ENCODE measurements at regions of chr11 and their contacts with region 1.

Region 1: GRCh38 chr11:32176223-32176934 is 85.5 kb downstream of the RCN1 start:
- DNase-seq: peak; percentile 50 to 81 (median 73)
- ATAC-seq: peak; percentile 85
- H3K4me3 ChIP-seq: no peak overlapping the region
- H3K4me3 Mint-ChIP-seq: no peak overlapping the region
- H3K27ac ChIP-seq: no peak overlapping the region
- H3K27ac Mint-ChIP-seq: no peak overlapping the region
- H3K4me1 ChIP-seq: no peaks in the 10 kb centered on the region
- H3K4me1 Mint-ChIP-seq: peaks cover 1 to 13% (median 1%) of the 10 kb centered on the region in 7 donors
- H3K27me3 ChIP-seq: peaks cover 0 to 3% of the 10 kb centered on the region in 2 donors
- H3K27me3 Mint-ChIP-seq: peaks cover 5 to 16% (median 14%) of the 10 kb centered on the region in 5 donors

Region 2: GRCh38 chr11:31107062-31107461 is 1069.3 kb before region 1 on chr11:
- CTCF ChIA-PET with region 1: interaction called, 4 read pairs
- POLR2A ChIA-PET with region 1: no interaction called
- intact Hi-C with region 1: loop called in 1 of 2 experiments (anchors 10 kb)
- DNase-seq: peak in 6 of 9 donors; percentile 1 to 25 (median 20)
- ATAC-seq: no peak
- H3K4me3 ChIP-seq: no peak overlapping the region
- H3K4me3 Mint-ChIP-seq: no peak overlapping the region
- H3K27ac ChIP-seq: no peak overlapping the region
- H3K27ac Mint-ChIP-seq: no peak overlapping the region
- H3K4me1 ChIP-seq: no peaks in the 10 kb centered on the region
- H3K4me1 Mint-ChIP-seq: no peaks in the 10 kb centered on the region
- H3K27me3 ChIP-seq: no peaks in the 10 kb centered on the region
- H3K27me3 Mint-ChIP-seq: peaks cover 0 to 10% (median 0%) of the 10 kb centered on the region in 5 donors

Region 3: GRCh38 chr11:31240338-31240904 is 936.0 kb before region 1 on chr11:
- CTCF ChIA-PET with region 1: interaction called, 10 read pairs
- POLR2A ChIA-PET with region 1: no interaction called
- intact Hi-C with region 1: loop called (anchors 1 kb)
- DNase-seq: peak in 6 of 9 donors; percentile 10 to 22 (median 15)
- ATAC-seq: no peak
- H3K4me3 ChIP-seq: no peak overlapping the region
- H3K4me3 Mint-ChIP-seq: no peak overlapping the region
- H3K27ac ChIP-seq: no peak overlapping the region
- H3K27ac Mint-ChIP-seq: no peak overlapping the region
- H3K4me1 ChIP-seq: no peaks in the 10 kb centered on the region
- H3K4me1 Mint-ChIP-seq: no peaks in the 10 kb centered on the region
- H3K27me3 ChIP-seq: peaks cover 0 to 3% of the 10 kb centered on the region in 2 donors
- H3K27me3 Mint-ChIP-seq: peaks cover 0 to 8% (median 0%) of the 10 kb centered on the region in 5 donors

Region 4: GRCh38 chr11:31487848-31488247 is 688.5 kb before region 1 on chr11:
- CTCF ChIA-PET with region 1: no interaction called
- POLR2A ChIA-PET with region 1: no interaction called
- intact Hi-C with region 1: loop called (anchors 1 to 5 kb)
- DNase-seq: peak in 4 of 9 donors; percentile 10 to 26 (median 15)
- ATAC-seq: peak; percentile 32
- H3K4me3 ChIP-seq: no peak overlapping the region
- H3K4me3 Mint-ChIP-seq: no peak overlapping the region
- H3K27ac ChIP-seq: no peak overlapping the region
- H3K27ac Mint-ChIP-seq: no peak overlapping the region
- H3K4me1 ChIP-seq: no peaks in the 10 kb centered on the region
- H3K4me1 Mint-ChIP-seq: peaks cover 6 to 46% (median 40%) of the 10 kb centered on the region in 7 donors
- H3K27me3 ChIP-seq: no peaks in the 10 kb centered on the region
- H3K27me3 Mint-ChIP-seq: no peaks in the 10 kb centered on the region

Region 5: GRCh38 chr11:32113200-32113919 is 63.0 kb before region 1 on chr11:
- CTCF ChIA-PET with region 1: no interaction called
- POLR2A ChIA-PET with region 1: no interaction called
- intact Hi-C with region 1: loop called in 1 of 2 experiments (anchors 5 kb)
- DNase-seq: no peak
- ATAC-seq: no peak
- H3K4me3 ChIP-seq: no peak overlapping the region
- H3K4me3 Mint-ChIP-seq: no peak overlapping the region
- H3K27ac ChIP-seq: no peak overlapping the region
- H3K27ac Mint-ChIP-seq: no peak overlapping the region
- H3K4me1 ChIP-seq: no peaks in the 10 kb centered on the region
- H3K4me1 Mint-ChIP-seq: peaks cover 0 to 3% (median 0%) of the 10 kb centered on the region in 7 donors
- H3K27me3 ChIP-seq: no peaks in the 10 kb centered on the region
- H3K27me3 Mint-ChIP-seq: peaks cover 6 to 24% (median 16%) of the 10 kb centered on the region in 5 donors

Measured in naive thymus-derived CD4-positive, alpha-beta T cell (primary cell).